GM12878 (cell line): ENCODE measurements at regions of chr4 and their contacts with region 1.

Region 1: GRCh38 chr4:113636438-113636818 is 125.1 kb downstream of the CAMK2D start:
- DNase-seq: no peak
- ATAC-seq: peak; percentile 69
- H3K4me3 ChIP-seq: peak overlapping the region; percentile 9; the same call in 1 of the 2 replicates
- H3K27ac ChIP-seq: peak overlapping the region; percentile 16
- H3K4me1 ChIP-seq: peaks cover 53% of the 10 kb centered on the region
- H3K27me3 ChIP-seq: no peaks in the 10 kb centered on the region
- CTCF ChIP-seq: peak; percentile 25 to 48 (median 42); a peak in 4 of 6 replicates
- EP300 ChIP-seq: no peak
- POLR2A ChIP-seq: no peak
- RAD21 ChIP-seq: peak; percentile 54

Region 2: DNA sequence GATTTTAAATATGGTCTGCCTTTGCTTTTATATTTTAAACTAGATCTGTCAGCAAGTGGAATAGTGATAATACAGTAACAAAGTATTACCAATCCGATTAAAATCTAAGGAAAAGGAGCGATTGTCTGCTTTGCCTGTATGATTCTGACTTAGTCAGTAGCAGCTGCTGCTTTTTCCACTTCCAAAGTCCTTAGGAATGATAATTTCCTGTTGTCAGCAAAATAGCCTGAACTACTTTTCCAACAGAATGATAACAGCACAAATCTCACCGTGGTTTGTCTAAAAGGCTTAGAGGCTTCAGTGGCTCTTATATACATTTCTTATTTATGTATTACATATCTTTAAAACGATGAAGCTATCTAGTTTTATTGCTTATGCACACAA is 297.0 kb before region 1 on chr4:
- CTCF ChIA-PET with region 1: no interaction called
- POLR2A ChIA-PET with region 1: no interaction called
- RAD21 ChIA-PET with region 1: no interaction called
- SMC1A ChIA-PET with region 1: no interaction called
- in situ Hi-C with region 1: no loop called
- intact Hi-C with region 1: no loop called
- DNase-seq: no peak
- ATAC-seq: no peak
- H3K4me3 ChIP-seq: no peak overlapping the region
- H3K27ac ChIP-seq: no peak overlapping the region
- H3K4me1 ChIP-seq: no peaks in the 10 kb centered on the region
- H3K27me3 ChIP-seq: no peaks in the 10 kb centered on the region
- CTCF ChIP-seq: no peak
- EP300 ChIP-seq: no peak
- POLR2A ChIP-seq: no peak
- RAD21 ChIP-seq: no peak

Region 3: GRCh38 chr4:113435893-113436292 is 200.5 kb before region 1 on chr4:
- CTCF ChIA-PET with region 1: no interaction called
- POLR2A ChIA-PET with region 1: no interaction called
- RAD21 ChIA-PET with region 1: no interaction called
- SMC1A ChIA-PET with region 1: no interaction called
- in situ Hi-C with region 1: no loop called
- intact Hi-C with region 1: no loop called
- DNase-seq: no peak
- ATAC-seq: peak; percentile 74
- H3K4me3 ChIP-seq: no peak overlapping the region
- H3K27ac ChIP-seq: no peak overlapping the region
- H3K4me1 ChIP-seq: no peaks in the 10 kb centered on the region
- H3K27me3 ChIP-seq: no peaks in the 10 kb centered on the region
- CTCF ChIP-seq: no peak
- EP300 ChIP-seq: no peak
- POLR2A ChIP-seq: no peak
- RAD21 ChIP-seq: no peak

Region 4: GRCh38 chr4:113499166-113499565 is 137.3 kb before region 1 on chr4:
- CTCF ChIA-PET with region 1: no interaction called
- POLR2A ChIA-PET with region 1: no interaction called
- RAD21 ChIA-PET with region 1: no interaction called
- SMC1A ChIA-PET with region 1: no interaction called
- in situ Hi-C with region 1: no loop called
- intact Hi-C with region 1: no loop called
- DNase-seq: no peak
- ATAC-seq: no peak
- H3K4me3 ChIP-seq: no peak overlapping the region
- H3K27ac ChIP-seq: no peak overlapping the region
- H3K4me1 ChIP-seq: no peaks in the 10 kb centered on the region
- H3K27me3 ChIP-seq: no peaks in the 10 kb centered on the region
- CTCF ChIP-seq: no peak
- EP300 ChIP-seq: no peak
- POLR2A ChIP-seq: no peak
- RAD21 ChIP-seq: no peak

Region 5: GRCh38 chr4:113547487-113548042 is 88.9 kb before region 1 on chr4:
- CTCF ChIA-PET with region 1: interaction called, 46 read pairs
- POLR2A ChIA-PET with region 1: interaction called, 5 read pairs
- RAD21 ChIA-PET with region 1: interaction called, 45 read pairs
- SMC1A ChIA-PET with region 1: interaction called, 81 read pairs
- in situ Hi-C with region 1: no loop called
- intact Hi-C with region 1: loop called (anchors 1 kb)
- DNase-seq: peak; percentile 97
- ATAC-seq: peak; percentile 98
- H3K4me3 ChIP-seq: no peak overlapping the region
- H3K27ac ChIP-seq: peak overlapping the region; percentile 18; the same call in 1 of the 2 replicates
- H3K4me1 ChIP-seq: peaks cover 9% of the 10 kb centered on the region
- H3K27me3 ChIP-seq: no peaks in the 10 kb centered on the region
- CTCF ChIP-seq: peak; percentile 96 to 99 (median 98); a peak in 5 of 6 replicates
- EP300 ChIP-seq: peak in 1 of 2 experiments; percentile 94; a peak in 2 of 4 replicates
- POLR2A ChIP-seq: no peak
- RAD21 ChIP-seq: peak; percentile 91

Region 6: GRCh38 chr4:113593400-113594230 is 42.8 kb before region 1 on chr4:
- CTCF ChIA-PET with region 1: interaction called, 3 read pairs
- POLR2A ChIA-PET with region 1: interaction called, 3 read pairs
- RAD21 ChIA-PET with region 1: interaction called, 4 read pairs
- SMC1A ChIA-PET with region 1: interaction called, 11 read pairs
- in situ Hi-C with region 1: no loop called
- intact Hi-C with region 1: no loop called
- DNase-seq: peak; percentile 8
- ATAC-seq: peak; percentile 84
- H3K4me3 ChIP-seq: no peak overlapping the region
- H3K27ac ChIP-seq: no peak overlapping the region; the same call in 1 of the 2 replicates
- H3K4me1 ChIP-seq: peaks cover 10% of the 10 kb centered on the region; the same call in 1 of the 2 replicates
- H3K27me3 ChIP-seq: no peaks in the 10 kb centered on the region
- CTCF ChIP-seq: no peak
- EP300 ChIP-seq: no peak
- POLR2A ChIP-seq: no peak
- RAD21 ChIP-seq: no peak

Region 7: GRCh38 chr4:113657586-113658233 is 21.3 kb after region 1 on chr4:
- CTCF ChIA-PET with region 1: interaction called, 22 read pairs
- POLR2A ChIA-PET with region 1: interaction called, 8 read pairs
- RAD21 ChIA-PET with region 1: interaction called, 43 read pairs
- SMC1A ChIA-PET with region 1: interaction called, 282 read pairs
- in situ Hi-C with region 1: no loop called
- intact Hi-C with region 1: no loop called
- DNase-seq: no peak
- ATAC-seq: no peak; the same call in 2 of the 3 replicates
- H3K4me3 ChIP-seq: no peak overlapping the region
- H3K27ac ChIP-seq: no peak overlapping the region
- H3K4me1 ChIP-seq: no peaks in the 10 kb centered on the region
- H3K27me3 ChIP-seq: no peaks in the 10 kb centered on the region
- CTCF ChIP-seq: no peak
- EP300 ChIP-seq: no peak
- POLR2A ChIP-seq: no peak
- RAD21 ChIP-seq: no peak

Region 8: GRCh38 chr4:113692809-113693411 is 56.5 kb after region 1 on chr4:
- CTCF ChIA-PET with region 1: interaction called, 4 read pairs
- POLR2A ChIA-PET with region 1: no interaction called
- RAD21 ChIA-PET with region 1: interaction called, 5 read pairs
- SMC1A ChIA-PET with region 1: interaction called, 13 read pairs
- in situ Hi-C with region 1: no loop called
- intact Hi-C with region 1: no loop called
- DNase-seq: no peak
- ATAC-seq: peak; percentile 89
- H3K4me3 ChIP-seq: no peak overlapping the region; the same call in 1 of the 2 replicates
- H3K27ac ChIP-seq: peak overlapping the region; percentile 52
- H3K4me1 ChIP-seq: peaks cover 16% of the 10 kb centered on the region
- H3K27me3 ChIP-seq: no peaks in the 10 kb centered on the region
- CTCF ChIP-seq: no peak
- EP300 ChIP-seq: peak in 1 of 2 experiments; percentile 56; a peak in 1 of 4 replicates
- POLR2A ChIP-seq: no peak
- RAD21 ChIP-seq: no peak

Region 9: DNA sequence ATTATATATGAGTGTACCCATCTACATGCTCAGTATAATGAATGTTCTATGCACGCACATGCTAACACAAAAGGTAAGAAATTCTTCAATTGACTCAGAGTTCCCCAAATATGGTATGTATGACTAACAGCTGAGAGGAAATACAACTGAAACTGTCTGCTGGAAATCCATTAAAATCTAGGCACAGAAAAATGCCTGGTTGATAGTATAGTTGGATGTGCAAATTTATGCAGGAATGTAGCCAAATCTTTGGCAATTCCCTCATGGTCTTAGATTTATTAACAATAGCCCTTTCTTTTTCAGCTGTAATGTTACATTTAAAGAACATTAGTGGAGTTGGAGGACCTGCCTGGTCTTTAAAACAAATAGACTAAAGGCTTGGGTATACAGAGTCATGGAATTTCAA is 119.6 kb after region 1 on chr4:
- CTCF ChIA-PET with region 1: interaction called, 35 read pairs
- POLR2A ChIA-PET with region 1: interaction called, 6 read pairs
- RAD21 ChIA-PET with region 1: interaction called, 72 read pairs
- SMC1A ChIA-PET with region 1: interaction called, 23 read pairs
- in situ Hi-C with region 1: no loop called
- intact Hi-C with region 1: no loop called
- DNase-seq: peak; percentile 51
- ATAC-seq: peak; percentile 72
- H3K4me3 ChIP-seq: peak overlapping the region; percentile 75; the same call in 1 of the 2 replicates
- H3K27ac ChIP-seq: peak overlapping the region; percentile 72
- H3K4me1 ChIP-seq: no peaks in the 10 kb centered on the region
- H3K27me3 ChIP-seq: no peaks in the 10 kb centered on the region
- CTCF ChIP-seq: no peak
- EP300 ChIP-seq: peak; percentile 84 to 95
- POLR2A ChIP-seq: no peak
- RAD21 ChIP-seq: no peak

Region 10: GRCh38 chr4:113837397-113837796 is 201.0 kb after region 1 on chr4:
- CTCF ChIA-PET with region 1: no interaction called
- POLR2A ChIA-PET with region 1: no interaction called
- RAD21 ChIA-PET with region 1: interaction called, 6 read pairs
- SMC1A ChIA-PET with region 1: interaction called, 10 read pairs
- in situ Hi-C with region 1: no loop called
- intact Hi-C with region 1: no loop called
- DNase-seq: peak; percentile 94
- ATAC-seq: peak; percentile 99
- H3K4me3 ChIP-seq: no peak overlapping the region
- H3K27ac ChIP-seq: peak overlapping the region; percentile 92
- H3K4me1 ChIP-seq: peaks cover 18% of the 10 kb centered on the region
- H3K27me3 ChIP-seq: no peaks in the 10 kb centered on the region
- CTCF ChIP-seq: no peak
- EP300 ChIP-seq: peak; percentile 59 to 98; a peak in 3 of 4 replicates
- POLR2A ChIP-seq: no peak
- RAD21 ChIP-seq: no peak